K562 (cell line): ENCODE measurements at regions of chr2 and their contacts with region 1.

Region 1: DNA sequence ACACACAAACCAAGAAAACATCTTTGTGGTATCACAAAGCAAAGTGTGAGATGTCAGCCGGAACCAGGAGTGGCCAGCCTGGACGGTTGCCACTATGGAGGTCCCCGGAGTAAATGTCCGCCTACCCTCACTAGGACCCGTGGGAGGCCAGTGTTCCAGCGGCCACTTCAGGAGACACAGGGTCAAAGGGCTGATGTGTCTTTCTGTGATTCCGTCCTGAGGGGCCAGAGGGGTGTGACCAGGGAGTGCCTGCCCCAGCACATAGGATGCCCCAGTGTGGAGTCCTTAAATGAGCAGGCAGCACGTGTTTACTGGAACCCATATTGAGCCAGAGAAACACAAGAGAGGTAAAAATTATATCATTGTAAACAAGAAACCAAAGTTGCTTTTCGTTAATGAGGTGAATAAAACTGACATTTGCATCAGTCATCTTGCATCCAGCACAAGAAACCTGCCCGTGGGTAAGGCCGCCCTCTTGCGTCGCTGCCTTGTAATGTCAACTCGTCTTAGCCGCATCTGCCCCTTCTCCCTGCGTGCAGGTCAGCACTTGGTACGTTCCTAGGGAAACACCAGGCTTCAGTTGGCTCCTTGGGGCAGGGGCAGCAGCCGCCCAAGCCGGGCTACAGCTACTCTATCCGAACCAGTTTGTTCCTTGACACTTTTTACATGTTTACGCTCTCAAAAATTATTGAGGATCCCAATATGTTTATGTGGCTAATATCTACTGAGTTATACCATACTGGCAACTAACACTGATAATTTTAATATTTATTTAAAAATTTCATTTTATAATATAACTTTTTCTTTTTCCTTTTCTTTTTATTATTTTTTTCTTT is 46.7 kb upstream of the LAPTM4A start:
- DNase-seq: peak; percentile 84 to 90 (median 88)
- ATAC-seq: peak; percentile 93
- H3K4me3 ChIP-seq: no peak overlapping the region
- H3K27ac ChIP-seq: no peak overlapping the region
- H3K4me1 ChIP-seq: no peaks in the 10 kb centered on the region; a peak in 1 of 5 replicates
- H3K27me3 ChIP-seq: no peaks in the 10 kb centered on the region
- CTCF ChIP-seq: peak; percentile 95 to 98 (median 96)
- EP300 ChIP-seq: no peak
- POLR2A ChIP-seq: no peak
- RAD21 ChIP-seq: peak; percentile 98

Region 2: GRCh38 chr2:18387441-18388206 is 1710.5 kb before region 1 on chr2:
- CTCF ChIA-PET with region 1: no interaction called
- POLR2A ChIA-PET with region 1: no interaction called
- in situ Hi-C with region 1: no loop called
- intact Hi-C with region 1: loop called (anchors 10 kb)
- DNase-seq: peak; percentile 52 to 75 (median 71)
- ATAC-seq: peak; percentile 98
- H3K4me3 ChIP-seq: no peak overlapping the region
- H3K27ac ChIP-seq: no peak overlapping the region
- H3K4me1 ChIP-seq: no peaks in the 10 kb centered on the region
- H3K27me3 ChIP-seq: no peaks in the 10 kb centered on the region
- CTCF ChIP-seq: peak; percentile 72 to 87 (median 85)
- EP300 ChIP-seq: no peak
- POLR2A ChIP-seq: no peak
- RAD21 ChIP-seq: peak; percentile 68 to 73

Region 3: DNA sequence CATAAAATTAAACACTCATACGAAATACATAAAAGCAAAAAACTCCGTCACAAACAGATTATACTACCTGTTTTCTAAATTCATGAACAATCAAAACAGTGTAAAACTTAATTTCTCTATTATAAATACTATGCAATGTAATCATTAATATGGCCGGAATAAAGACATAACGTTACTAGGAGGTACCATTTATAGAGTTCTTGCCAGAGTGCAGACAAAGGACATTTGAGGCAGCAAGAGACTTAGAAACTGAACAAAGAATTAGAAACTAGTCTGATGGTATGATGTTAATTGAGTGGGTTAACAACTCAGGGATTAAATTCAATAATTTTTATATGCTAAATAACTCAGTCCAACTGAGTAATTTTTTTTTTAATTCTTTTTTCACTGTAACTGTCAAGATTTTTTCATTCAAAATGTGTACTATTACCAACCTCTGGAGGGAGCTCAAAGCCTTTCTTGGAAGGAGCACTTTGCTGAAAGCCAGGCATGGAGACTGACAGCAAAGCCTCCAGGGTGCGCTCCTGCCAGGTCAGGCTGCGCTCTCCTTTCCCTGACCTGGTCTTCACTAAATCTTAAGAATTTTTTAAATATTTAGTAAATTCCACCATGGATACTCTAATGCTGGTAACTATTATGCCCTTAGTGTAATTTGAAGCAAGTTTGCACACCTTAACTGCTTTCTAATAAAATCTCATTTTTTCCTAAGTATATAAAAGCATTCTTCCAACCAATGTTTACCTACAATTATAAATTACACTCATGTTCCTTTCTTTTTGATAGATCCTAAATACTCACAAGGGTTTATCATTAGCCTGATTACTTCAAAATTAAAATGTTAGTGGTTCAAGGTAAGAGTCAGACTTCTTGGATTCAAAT is 142.3 kb before region 1 on chr2:
- CTCF ChIA-PET with region 1: interaction called, 64 read pairs
- POLR2A ChIA-PET with region 1: no interaction called
- in situ Hi-C with region 1: loop called (anchors 5 kb)
- intact Hi-C with region 1: loop called (anchors 1 kb)
- DNase-seq: peak; percentile 57 to 84 (median 65)
- ATAC-seq: peak; percentile 100
- H3K4me3 ChIP-seq: no peak overlapping the region
- H3K27ac ChIP-seq: no peak overlapping the region
- H3K4me1 ChIP-seq: no peaks in the 10 kb centered on the region
- H3K27me3 ChIP-seq: no peaks in the 10 kb centered on the region
- CTCF ChIP-seq: peak; percentile 92 to 100 (median 99)
- EP300 ChIP-seq: no peak
- POLR2A ChIP-seq: no peak
- RAD21 ChIP-seq: peak; percentile 97 to 98

Region 4: DNA sequence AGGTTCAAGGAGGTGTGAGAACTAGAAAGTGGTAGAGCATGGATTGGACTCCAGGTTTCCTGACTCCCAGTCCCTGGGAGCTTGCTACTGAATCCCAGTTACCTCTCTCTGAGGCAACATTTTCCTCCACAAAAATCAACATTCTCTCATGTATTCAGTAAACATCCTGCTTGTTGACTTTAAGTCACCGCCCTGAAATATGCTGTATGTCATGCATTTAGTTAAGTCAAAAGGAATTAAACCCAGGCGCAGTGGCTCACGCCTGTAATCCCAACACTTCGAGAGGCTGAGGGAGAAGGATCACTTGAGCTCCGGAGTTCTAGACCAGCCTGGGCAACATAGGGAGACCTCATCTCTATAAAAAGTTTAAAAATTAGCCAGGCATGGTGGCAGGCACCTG is 89.4 kb before region 1 on chr2:
- CTCF ChIA-PET with region 1: interaction called, 4 read pairs
- POLR2A ChIA-PET with region 1: no interaction called
- in situ Hi-C with region 1: loop called (anchors 5 kb)
- intact Hi-C with region 1: no loop called
- DNase-seq: no peak
- ATAC-seq: no peak
- H3K4me3 ChIP-seq: no peak overlapping the region
- H3K27ac ChIP-seq: no peak overlapping the region
- H3K4me1 ChIP-seq: peaks cover 0 to 11% of the 10 kb centered on the region in 2 experiments; a peak in 2 of 5 replicates
- H3K27me3 ChIP-seq: peaks cover 21 to 50% of the 10 kb centered on the region in 2 experiments
- CTCF ChIP-seq: no peak
- EP300 ChIP-seq: no peak
- POLR2A ChIP-seq: no peak
- RAD21 ChIP-seq: no peak

Region 5: DNA sequence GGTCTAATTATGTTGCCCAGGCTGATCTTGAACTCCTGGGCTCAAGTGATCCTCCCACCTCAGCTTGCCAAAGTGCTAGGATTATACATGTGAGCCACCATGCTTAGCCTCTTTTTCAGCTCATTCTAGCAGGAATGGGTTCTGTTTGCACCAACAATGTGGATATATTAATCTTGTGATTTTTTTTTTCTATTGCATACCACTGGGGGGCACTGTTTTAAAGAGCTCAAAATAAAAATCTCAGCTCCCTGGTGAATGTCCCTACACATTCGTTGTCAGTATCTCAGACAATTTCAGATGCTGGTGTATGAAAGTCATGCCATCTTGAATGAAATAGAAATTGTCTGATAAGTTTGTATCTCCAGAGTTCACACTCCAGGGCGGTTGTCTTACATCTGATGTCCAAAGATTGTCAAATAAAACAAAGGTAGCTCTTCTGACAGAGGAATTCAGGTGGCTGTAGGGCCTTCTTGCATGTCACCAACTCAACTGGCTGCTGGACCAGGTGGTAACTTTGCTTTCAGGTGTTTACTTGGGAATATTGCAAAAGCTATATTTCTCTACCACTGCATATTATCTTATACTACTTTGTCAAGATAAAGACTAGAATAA is 82.5 kb before region 1 on chr2:
- CTCF ChIA-PET with region 1: interaction called, 18 read pairs
- POLR2A ChIA-PET with region 1: no interaction called
- in situ Hi-C with region 1: no loop called
- intact Hi-C with region 1: loop called (anchors 1 kb)
- DNase-seq: peak; percentile 38 to 55 (median 44)
- ATAC-seq: peak; percentile 61
- H3K4me3 ChIP-seq: no peak overlapping the region
- H3K27ac ChIP-seq: no peak overlapping the region
- H3K4me1 ChIP-seq: peaks cover 0 to 11% of the 10 kb centered on the region in 2 experiments; a peak in 2 of 5 replicates
- H3K27me3 ChIP-seq: peaks cover 16 to 27% of the 10 kb centered on the region in 2 experiments
- CTCF ChIP-seq: peak; percentile 39 to 78 (median 52); a peak in 4 of 6 replicates
- EP300 ChIP-seq: no peak
- POLR2A ChIP-seq: no peak
- RAD21 ChIP-seq: peak; percentile 66 to 76

Region 6: GRCh38 chr2:20145497-20146193 is 47.5 kb after region 1 on chr2:
- CTCF ChIA-PET with region 1: no interaction called
- POLR2A ChIA-PET with region 1: no interaction called
- in situ Hi-C with region 1: no loop called
- intact Hi-C with region 1: no loop called
- DNase-seq: peak; percentile 34 to 79 (median 53)
- ATAC-seq: peak; percentile 84
- H3K4me3 ChIP-seq: no peak overlapping the region
- H3K27ac ChIP-seq: peak overlapping the region; percentile 37; the same call in 1 of the 3 replicates
- H3K4me1 ChIP-seq: peaks cover 12 to 28% of the 10 kb centered on the region in 2 experiments; a peak in 4 of 5 replicates
- H3K27me3 ChIP-seq: peaks cover 0 to 4% of the 10 kb centered on the region in 2 experiments; a peak in 1 of 5 replicates
- CTCF ChIP-seq: no peak
- EP300 ChIP-seq: no peak
- POLR2A ChIP-seq: no peak
- RAD21 ChIP-seq: no peak

Region 7: GRCh38 chr2:20291106-20291564 is 193.0 kb after region 1 on chr2:
- CTCF ChIA-PET with region 1: no interaction called
- POLR2A ChIA-PET with region 1: no interaction called
- in situ Hi-C with region 1: no loop called
- intact Hi-C with region 1: loop called (anchors 2 kb)
- DNase-seq: peak; percentile 60 to 83 (median 70)
- ATAC-seq: peak; percentile 100
- H3K4me3 ChIP-seq: no peak overlapping the region
- H3K27ac ChIP-seq: peak overlapping the region; percentile 39; the same call in 2 of the 3 replicates
- H3K4me1 ChIP-seq: peaks cover 4 to 7% of the 10 kb centered on the region in 2 experiments; a peak in 3 of 5 replicates
- H3K27me3 ChIP-seq: no peaks in the 10 kb centered on the region
- CTCF ChIP-seq: peak; percentile 76 to 98 (median 90)
- EP300 ChIP-seq: no peak
- POLR2A ChIP-seq: no peak
- RAD21 ChIP-seq: peak; percentile 34 to 53

Region 8: GRCh38 chr2:20635675-20636584 is 537.8 kb after region 1 on chr2:
- CTCF ChIA-PET with region 1: no interaction called
- POLR2A ChIA-PET with region 1: no interaction called
- in situ Hi-C with region 1: loop called (anchors 10 kb)
- intact Hi-C with region 1: no loop called
- DNase-seq: peak; percentile 84 to 86 (median 85)
- ATAC-seq: peak; percentile 98
- H3K4me3 ChIP-seq: no peak overlapping the region
- H3K27ac ChIP-seq: no peak overlapping the region
- H3K4me1 ChIP-seq: peaks cover 0 to 13% of the 10 kb centered on the region in 2 experiments; a peak in 1 of 5 replicates
- H3K27me3 ChIP-seq: no peaks in the 10 kb centered on the region
- CTCF ChIP-seq: peak; percentile 93 to 98 (median 96)
- EP300 ChIP-seq: no peak
- POLR2A ChIP-seq: no peak
- RAD21 ChIP-seq: peak; percentile 99 to 100